GM10248 (cell line): ENCODE measurements at regions of chr5 and their contacts with region 1.

Region 1: DNA sequence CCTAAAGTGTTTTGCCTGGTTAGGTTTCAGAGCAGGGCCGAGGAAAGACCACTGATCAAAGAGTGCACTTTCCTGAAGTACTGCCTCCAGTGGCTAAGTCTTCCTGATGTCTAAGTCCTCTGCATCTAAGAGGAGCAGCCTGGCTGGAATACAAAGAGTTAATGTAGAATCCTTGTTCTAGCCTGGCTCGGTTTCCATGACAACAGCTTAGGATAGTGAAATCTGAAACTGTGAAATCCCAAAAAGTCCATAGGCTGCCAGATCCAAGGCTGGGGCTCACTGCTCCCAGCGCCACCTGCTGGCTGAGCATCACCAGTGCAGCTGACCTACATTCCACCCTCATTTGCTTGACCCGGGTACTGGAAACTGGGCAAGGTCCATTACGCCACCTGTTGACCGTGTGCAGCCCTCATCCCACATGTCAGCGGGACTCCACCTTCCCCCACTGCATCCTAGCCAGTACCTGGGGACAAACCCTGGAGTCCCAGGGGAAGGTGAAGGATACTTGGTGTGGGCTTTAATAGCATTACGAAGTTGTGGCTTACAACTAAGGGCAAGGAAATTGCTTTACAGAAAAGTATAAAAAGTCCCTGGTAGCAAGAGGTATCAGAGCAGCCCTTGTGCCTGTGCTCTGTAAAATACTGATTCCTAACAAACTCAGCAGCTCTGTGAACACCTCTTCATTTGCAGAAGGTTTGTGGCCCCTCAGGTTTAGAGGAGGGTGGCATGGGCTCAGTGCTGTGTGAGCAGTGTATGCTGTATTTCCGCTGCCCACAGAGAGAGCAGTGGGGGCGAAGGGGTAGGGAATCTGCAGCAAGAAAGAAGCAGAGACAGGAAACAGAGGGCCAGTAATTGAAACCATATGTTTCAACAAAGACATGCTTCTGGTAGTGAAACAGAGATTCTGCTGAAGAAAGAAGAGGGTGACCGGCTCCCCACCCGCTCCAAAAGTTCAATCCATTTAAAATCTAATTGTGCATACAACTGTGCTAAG is 36.0 kb downstream of the PCDHGC5 start:
- DNase-seq: peak; percentile 78
- CTCF ChIP-seq: peak; percentile 99

Region 2: GRCh38 chr5:141100240-141100805 is 424.6 kb before region 1 on chr5 and contains the start of gene PCDHB3:
- CTCF ChIA-PET with region 1: no interaction called
- POLR2A ChIA-PET with region 1: no interaction called
- DNase-seq: no peak
- CTCF ChIP-seq: no peak

Region 3: GRCh38 chr5:141402553-141403260 is 122.2 kb before region 1 on chr5 and contains the start of gene PCDHGA9:
- CTCF ChIA-PET with region 1: interaction called, 10 read pairs
- POLR2A ChIA-PET with region 1: no interaction called
- DNase-seq: no peak
- CTCF ChIP-seq: peak; percentile 15

Region 4: DNA sequence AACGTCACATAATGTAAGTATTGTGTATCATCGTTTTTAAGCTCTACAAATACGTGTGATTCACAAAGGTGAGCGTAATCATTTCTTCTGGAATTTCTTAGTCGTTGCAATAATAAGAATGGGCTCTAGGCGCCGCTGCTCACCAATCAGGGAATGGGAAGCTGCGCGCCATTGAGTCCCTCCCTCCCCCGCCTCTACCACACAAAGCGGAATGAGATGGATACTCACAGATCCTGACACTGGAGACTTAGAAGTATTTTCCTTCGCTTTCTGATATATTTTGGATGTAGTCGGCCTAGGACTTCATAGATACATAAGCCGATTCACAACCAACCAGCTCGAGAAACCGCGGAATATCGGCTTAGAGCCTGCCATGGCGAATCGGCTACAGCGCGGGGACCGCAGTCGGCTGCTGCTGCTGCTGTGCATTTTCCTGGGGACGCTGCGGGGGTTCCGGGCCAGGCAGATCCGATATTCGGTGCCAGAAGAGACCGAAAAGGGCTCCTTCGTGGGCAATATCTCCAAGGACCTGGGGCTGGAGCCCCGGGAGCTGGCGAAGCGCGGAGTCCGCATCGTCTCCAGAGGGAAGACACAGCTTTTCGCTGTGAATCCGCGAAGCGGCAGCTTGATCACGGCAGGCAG is 103.9 kb before region 1 on chr5 and contains the start of gene PCDHGA11:
- CTCF ChIA-PET with region 1: interaction called, 127 read pairs
- POLR2A ChIA-PET with region 1: no interaction called
- DNase-seq: peak; percentile 69
- CTCF ChIP-seq: peak; percentile 71

Region 5: GRCh38 chr5:141492168-141492885 is 32.6 kb before region 1 on chr5:
- CTCF ChIA-PET with region 1: interaction called, 30 read pairs
- POLR2A ChIA-PET with region 1: no interaction called
- DNase-seq: peak; percentile 63
- CTCF ChIP-seq: no peak

Region 6: GRCh38 chr5:141547488-141547887 is 22.6 kb after region 1 on chr5:
- CTCF ChIA-PET with region 1: interaction called, 14 read pairs
- POLR2A ChIA-PET with region 1: no interaction called
- DNase-seq: no peak
- CTCF ChIP-seq: no peak